ENCODE measurements at regions of chr14 and their contacts with region 1.

Region 1: GRCh38 chr14:63051966-63052365 is 6.7 kb upstream of the KCNH5 start:
- DNase-seq: no peak
- CTCF ChIP-seq: no peak

Region 2: DNA sequence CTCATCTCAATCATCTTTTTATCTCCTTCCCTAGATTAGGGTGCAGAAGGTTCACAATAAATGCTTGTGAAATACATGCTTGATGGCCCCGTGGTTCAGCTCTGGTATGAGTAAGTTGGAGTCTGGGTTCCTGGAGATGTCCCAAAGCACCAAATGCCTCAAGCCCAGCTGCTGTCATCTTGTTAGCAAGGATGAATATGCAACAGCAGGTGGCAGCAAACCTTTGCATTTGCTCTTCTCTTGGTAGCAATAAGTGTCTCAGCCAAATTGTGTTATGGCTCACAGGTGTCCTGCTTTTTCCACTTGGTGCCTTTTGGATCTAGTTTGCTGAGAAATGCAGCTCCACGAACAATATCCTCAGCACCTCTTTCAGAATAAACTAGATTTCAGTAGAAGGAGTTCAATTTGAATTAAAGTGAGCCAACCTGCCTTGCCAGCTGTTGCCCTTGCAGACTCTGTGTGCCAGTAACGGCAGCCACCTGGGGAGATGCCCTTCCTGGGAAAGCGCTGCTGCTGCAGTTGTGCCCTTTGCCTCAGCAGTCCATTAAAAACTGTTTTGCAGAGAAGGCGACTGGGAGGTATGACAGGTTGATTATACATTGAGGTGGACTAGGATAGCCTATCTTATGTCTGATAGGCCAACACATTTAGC is 872.5 kb before region 1 on chr14:
- in situ Hi-C with region 1: loop called (anchors 25 kb)
- DNase-seq: peak; percentile 26
- CTCF ChIP-seq: peak; percentile 59